Posterior vena cava (tissue), 2 donors: ENCODE measurements at regions of chr1 and their contacts with region 1.

Region 1: GRCh38 chr1:200979574-200980451 is 43.7 kb downstream of the KIF21B start:
- DNase-seq: no peak

Region 2: GRCh38 chr1:201006450-201006849 is 26.6 kb after region 1 on chr1:
- intact Hi-C with region 1: no loop called
- DNase-seq: no peak

Region 3: DNA sequence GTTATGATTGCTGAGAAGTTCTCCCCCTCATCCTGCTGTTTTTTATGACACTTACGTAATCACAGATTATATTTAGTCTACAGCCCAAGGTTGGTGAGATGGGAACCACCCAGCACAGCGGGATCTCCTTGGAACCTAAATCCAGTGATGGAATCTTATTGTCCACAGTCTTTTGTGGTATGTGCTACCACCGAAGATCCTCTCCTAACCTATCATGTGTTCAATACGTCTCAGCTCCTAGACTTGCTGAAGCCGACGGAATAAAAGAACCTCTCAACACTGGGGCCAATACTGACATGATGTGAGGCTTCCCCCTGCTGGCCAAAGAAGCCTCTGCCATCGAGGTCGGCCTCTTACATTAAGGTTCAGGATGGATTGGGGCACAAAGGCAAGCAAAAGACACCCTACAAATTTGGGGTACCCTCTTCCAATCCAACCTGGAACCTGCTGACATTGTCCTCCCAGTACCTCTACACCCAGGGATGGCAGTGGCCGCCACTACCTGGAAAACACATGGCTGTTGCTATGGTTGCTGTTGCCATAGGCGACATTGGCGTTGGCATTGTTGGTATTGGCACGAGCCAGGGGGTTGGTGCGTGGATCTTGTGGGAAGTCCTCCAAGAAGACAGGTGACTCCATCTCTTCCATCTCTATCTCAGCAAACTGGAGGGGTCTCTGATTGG is 63.1 kb after region 1 on chr1:
- intact Hi-C with region 1: loop called in 1 of 2 experiments (anchors 2 kb)
- DNase-seq: peak; percentile 87

Region 4: DNA sequence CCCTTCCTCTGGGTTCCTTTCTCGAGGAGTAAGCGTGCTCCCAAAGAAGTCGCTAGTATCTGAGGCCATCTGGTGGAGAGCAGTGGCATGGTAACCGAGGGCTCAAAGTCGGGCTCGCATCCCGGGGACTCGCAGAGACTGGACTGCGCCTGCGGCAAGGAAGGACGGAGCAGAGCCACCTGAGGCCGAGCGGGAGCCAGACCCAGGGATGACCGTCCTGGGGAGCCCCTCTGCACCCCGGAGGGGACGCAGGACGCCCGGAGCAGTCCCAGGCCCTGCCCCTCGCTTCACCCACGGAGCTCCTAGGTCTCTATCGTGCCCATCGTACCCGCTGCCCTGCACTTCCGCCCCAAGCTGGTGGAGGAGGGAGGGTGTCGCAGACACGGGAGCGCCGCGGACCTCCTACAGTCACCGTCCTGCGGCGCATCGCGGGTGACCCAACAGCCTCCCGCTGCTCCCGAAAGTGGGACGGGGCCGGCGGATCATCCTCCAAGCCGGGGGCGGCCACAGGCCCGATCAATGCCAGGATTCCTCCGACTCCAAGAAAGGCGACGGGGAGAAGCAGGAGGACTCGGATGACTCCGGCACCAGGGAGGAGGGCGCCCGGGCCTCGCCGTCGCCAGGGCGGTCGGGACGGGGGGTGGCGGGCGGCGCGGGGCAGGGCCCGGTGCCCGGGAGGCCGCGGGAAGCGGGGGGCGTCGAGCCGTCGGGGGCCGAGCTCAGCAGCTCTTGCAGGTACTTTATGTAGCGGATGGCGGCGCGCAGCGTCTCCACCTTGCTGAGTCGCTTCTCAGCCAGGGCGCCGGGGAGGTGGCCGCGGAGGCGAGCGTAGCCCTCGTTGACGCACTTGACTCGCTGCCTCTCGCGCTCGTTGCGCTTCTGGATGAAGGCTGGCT is 134.7 kb after region 1 on chr1:
- intact Hi-C with region 1: loop called in 1 of 2 experiments (anchors 5 kb)
- DNase-seq: peak; percentile 94